ENCODE measurements at regions of chr16 and their contacts with region 1.

Region 1: DNA sequence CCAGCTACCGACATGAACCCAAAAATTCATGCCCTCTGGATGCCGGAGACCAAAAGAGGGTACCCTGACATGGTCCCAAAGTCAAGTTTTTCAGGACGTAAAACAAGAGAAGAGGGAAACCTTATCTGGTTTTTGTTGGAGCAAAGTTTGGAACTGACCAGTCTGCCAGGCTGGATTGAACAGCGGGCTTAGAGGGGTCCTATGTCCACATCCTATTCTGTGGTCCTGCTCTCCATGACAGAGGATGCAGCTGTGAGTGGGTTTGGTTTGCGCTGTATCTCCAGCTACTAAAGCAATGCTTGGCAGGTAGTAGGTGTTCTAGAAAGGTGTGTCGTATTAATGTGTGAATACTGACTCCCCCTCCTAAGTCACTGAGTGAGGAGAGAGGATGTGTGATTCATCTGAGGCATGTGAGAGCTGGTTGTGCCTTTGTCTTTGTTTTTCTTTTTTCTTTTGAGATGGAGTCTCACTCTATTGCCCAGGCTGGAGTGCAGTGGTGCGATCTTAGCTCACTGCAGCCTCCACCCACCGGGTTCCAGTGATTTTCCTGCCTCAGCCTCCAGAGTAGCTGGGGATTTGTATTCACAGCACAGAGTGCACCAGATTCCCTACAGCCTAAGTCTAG is 31.0 kb downstream of the PMM2 start:
- DNase-seq: no peak
- H3K4me3 ChIP-seq: no peak overlapping the region
- H3K27ac ChIP-seq: no peak overlapping the region
- H3K4me1 ChIP-seq: peaks cover 2% of the 10 kb centered on the region
- H3K27me3 ChIP-seq: no peaks in the 10 kb centered on the region
- CTCF ChIP-seq: no peak

Region 2: DNA sequence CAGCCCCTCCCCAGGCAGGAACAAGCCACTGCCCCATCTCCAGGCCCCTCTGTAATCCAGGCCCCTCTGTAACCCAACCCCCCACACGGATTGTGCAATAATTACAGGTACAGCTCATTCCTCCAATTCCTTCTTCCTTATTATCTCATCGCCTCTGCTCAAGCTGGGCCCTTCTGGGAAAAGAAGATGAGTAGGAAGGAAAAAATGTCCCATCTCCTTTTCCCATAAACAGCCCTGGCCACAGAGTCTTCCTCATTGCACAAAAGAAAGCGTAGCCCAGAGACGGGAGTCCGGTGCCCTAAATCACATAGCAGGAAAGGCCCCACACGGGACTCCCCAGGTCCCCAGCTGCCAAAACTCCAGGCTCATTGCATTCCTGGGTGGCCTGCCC is 49.9 kb after region 1 on chr16:
- intact Hi-C with region 1: no loop called
- DNase-seq: no peak
- H3K4me3 ChIP-seq: no peak overlapping the region
- H3K27ac ChIP-seq: no peak overlapping the region
- H3K4me1 ChIP-seq: peaks cover 3% of the 10 kb centered on the region
- H3K27me3 ChIP-seq: peaks cover 23% of the 10 kb centered on the region
- CTCF ChIP-seq: no peak

Region 3: GRCh38 chr16:8951447-8952280 is 123.0 kb after region 1 on chr16:
- intact Hi-C with region 1: loop called (anchors 5 kb)
- DNase-seq: no peak
- H3K4me3 ChIP-seq: no peak overlapping the region
- H3K27ac ChIP-seq: no peak overlapping the region
- H3K4me1 ChIP-seq: peaks cover 92% of the 10 kb centered on the region
- H3K27me3 ChIP-seq: no peaks in the 10 kb centered on the region
- CTCF ChIP-seq: no peak